ENCODE measurements at regions of chr12 and their contacts with region 1.

Region 1: GRCh38 chr12:90216815-90217214 is 508.2 kb upstream of the ATP2B1 start:
- DNase-seq: no peak
- H3K4me3 ChIP-seq: no peak overlapping the region
- H3K27ac ChIP-seq: no peak overlapping the region
- H3K4me1 ChIP-seq: no peaks in the 10 kb centered on the region
- H3K27me3 ChIP-seq: no peaks in the 10 kb centered on the region
- CTCF ChIP-seq: no peak
- EP300 ChIP-seq: no peak
- POLR2A ChIP-seq: no peak

Region 2: GRCh38 chr12:89901906-89902642 is 314.7 kb before region 1 on chr12:
- in situ Hi-C with region 1: no loop called
- intact Hi-C with region 1: loop called (anchors 5 kb)
- DNase-seq: no peak
- H3K4me3 ChIP-seq: no peak overlapping the region
- H3K27ac ChIP-seq: no peak overlapping the region
- H3K4me1 ChIP-seq: no peaks in the 10 kb centered on the region
- H3K27me3 ChIP-seq: no peaks in the 10 kb centered on the region
- CTCF ChIP-seq: no peak
- EP300 ChIP-seq: no peak
- POLR2A ChIP-seq: no peak